ENCODE measurements at regions of chr15 and their contacts with region 1.

Region 1: GRCh38 chr15:49620658-49621368 is at the starts of genes DTWD1 and FAM227B:
- DNase-seq: peak; percentile 98
- ATAC-seq: peak; percentile 98
- H3K4me3 ChIP-seq: peak within 1 kb of the TSS; percentile 77
- H3K27ac ChIP-seq: peak within 1 kb of the TSS; percentile 95
- H3K4me1 ChIP-seq: peaks cover 3% of the 10 kb centered on the region; the same call in 1 of the 2 replicates
- H3K27me3 ChIP-seq: no peaks in the 10 kb centered on the region
- CTCF ChIP-seq: no peak
- POLR2A ChIP-seq: peak; percentile 92
- RAD21 ChIP-seq: peak; percentile 32
- total RNA-seq, gene DTWD1: 20.1 and 24.4 TPM in 2 replicates
- total RNA-seq, gene FAM227B: 1.8 and 2.5 TPM in 2 replicates

Region 2: GRCh38 chr15:49235446-49236124 is 385.2 kb before region 1 on chr15:
- CTCF ChIA-PET with region 1: no interaction called
- POLR2A ChIA-PET with region 1: no interaction called
- dilution Hi-C with region 1: no loop called
- in situ Hi-C with region 1: loop called (anchors 25 kb)
- intact Hi-C with region 1: loop called (anchors 5 kb)
- DNase-seq: peak; percentile 92
- ATAC-seq: peak; percentile 88
- H3K4me3 ChIP-seq: no peak overlapping the region
- H3K27ac ChIP-seq: peak overlapping the region; percentile 70; the same call in 1 of the 2 replicates
- H3K4me1 ChIP-seq: peaks cover 3% of the 10 kb centered on the region
- H3K27me3 ChIP-seq: no peaks in the 10 kb centered on the region
- CTCF ChIP-seq: peak; percentile 91
- POLR2A ChIP-seq: no peak
- RAD21 ChIP-seq: peak; percentile 94

Region 3: DNA sequence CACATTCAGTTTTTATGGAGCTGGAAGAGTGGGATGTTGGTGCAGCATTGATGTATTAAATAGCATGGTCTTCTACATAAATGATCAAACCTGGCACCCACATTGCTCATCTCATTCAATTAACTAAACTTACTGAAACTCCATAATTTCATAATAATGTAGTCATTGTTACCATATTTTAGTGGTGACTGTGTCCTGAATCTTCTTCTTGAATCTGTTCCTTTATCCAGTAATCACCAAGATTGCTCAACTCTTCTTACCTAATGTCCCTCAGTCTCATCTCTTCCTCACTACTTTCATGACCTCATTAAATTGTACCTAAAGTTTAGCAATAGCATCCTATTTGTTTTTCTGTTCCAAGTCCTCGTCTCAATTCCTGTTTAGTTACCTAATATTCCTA is 128.0 kb before region 1 on chr15:
- CTCF ChIA-PET with region 1: interaction called, 3 read pairs
- POLR2A ChIA-PET with region 1: interaction called, 4 read pairs
- dilution Hi-C with region 1: no loop called
- in situ Hi-C with region 1: no loop called
- intact Hi-C with region 1: loop called (anchors 5 kb)
- DNase-seq: peak; percentile 90
- ATAC-seq: no peak
- H3K4me3 ChIP-seq: no peak overlapping the region
- H3K27ac ChIP-seq: no peak overlapping the region
- H3K4me1 ChIP-seq: peaks cover 14% of the 10 kb centered on the region
- H3K27me3 ChIP-seq: no peaks in the 10 kb centered on the region
- CTCF ChIP-seq: no peak
- POLR2A ChIP-seq: no peak
- RAD21 ChIP-seq: no peak

Region 4: DNA sequence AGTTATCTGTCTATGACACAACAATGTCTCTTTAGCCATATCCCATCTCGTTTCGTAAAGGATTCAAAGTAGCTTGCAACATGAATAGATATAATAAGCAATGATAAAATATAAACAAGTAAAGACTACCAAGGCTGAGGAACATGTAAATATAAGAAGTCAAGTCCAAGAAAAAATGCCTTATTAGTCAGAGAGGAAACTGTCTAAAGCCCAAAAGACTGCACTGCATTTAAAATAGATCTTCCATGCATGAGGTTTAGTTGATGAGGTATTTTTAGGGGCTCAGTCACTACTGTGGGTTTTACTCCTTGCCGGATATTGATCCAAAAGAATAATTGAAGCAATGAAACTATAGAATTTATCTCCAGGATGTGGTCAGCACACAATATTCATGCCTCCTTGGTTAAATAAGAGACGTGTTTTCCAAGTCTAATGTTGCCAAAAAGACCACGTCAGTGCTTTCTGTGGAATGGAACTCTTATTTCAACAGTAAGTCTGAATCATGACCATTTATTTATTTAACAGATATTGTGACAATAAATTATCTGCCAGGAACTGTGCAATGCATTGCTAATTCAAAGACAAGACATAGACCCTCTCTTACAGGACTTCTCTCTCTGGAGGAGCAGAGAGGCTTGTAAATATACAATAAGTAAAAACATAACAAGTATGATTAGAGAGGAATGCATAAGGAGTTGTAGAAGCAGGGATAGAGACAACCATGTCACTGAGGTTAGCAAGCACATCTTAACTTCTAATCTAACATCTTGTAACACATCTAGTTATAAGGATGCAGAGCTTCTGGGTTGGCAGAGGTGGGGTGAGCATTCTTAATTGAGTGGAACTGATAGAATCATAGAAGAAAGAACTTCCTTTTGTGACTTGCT is 227.4 kb after region 1 on chr15:
- CTCF ChIA-PET with region 1: no interaction called
- POLR2A ChIA-PET with region 1: no interaction called
- dilution Hi-C with region 1: no loop called
- in situ Hi-C with region 1: no loop called
- intact Hi-C with region 1: loop called (anchors 2 kb)
- DNase-seq: peak; percentile 99
- ATAC-seq: peak; percentile 80
- H3K4me3 ChIP-seq: no peak overlapping the region
- H3K27ac ChIP-seq: peak overlapping the region; percentile 100
- H3K4me1 ChIP-seq: peaks cover 19% of the 10 kb centered on the region
- H3K27me3 ChIP-seq: no peaks in the 10 kb centered on the region
- CTCF ChIP-seq: no peak
- POLR2A ChIP-seq: no peak
- RAD21 ChIP-seq: no peak; the same call in none of the 2 replicates

Region 5: DNA sequence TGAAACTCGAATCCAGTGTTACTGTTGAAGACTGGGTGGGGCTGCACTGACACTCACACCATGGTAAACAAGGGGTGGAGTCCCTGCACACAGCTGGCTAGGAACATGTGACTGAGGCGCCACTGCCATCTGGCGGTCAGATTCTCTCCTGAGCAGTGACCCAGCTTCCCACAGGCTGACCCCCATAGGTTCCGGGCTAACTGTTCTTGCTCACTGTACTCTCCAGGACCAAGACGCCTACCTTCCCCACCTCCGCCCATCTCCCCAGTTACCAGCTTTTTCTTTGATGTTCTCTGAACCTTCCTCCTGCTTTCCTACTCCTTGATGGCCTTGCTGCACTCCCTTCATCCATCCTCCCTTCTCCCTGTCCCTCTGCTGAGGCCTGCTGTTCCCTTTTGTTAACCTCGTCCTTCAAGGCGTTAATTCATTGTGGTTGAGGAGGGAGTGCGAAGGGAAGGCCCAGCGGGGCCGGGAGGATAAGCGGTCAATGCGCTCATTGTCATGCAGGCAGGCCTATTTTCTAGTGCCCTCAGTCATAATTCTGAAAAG is 383.0 kb after region 1 on chr15:
- CTCF ChIA-PET with region 1: no interaction called
- POLR2A ChIA-PET with region 1: interaction called, 3 read pairs
- dilution Hi-C with region 1: no loop called
- in situ Hi-C with region 1: no loop called
- intact Hi-C with region 1: loop called (anchors 1 kb)
- DNase-seq: peak; percentile 87
- ATAC-seq: peak; percentile 98
- H3K4me3 ChIP-seq: no peak overlapping the region
- H3K27ac ChIP-seq: peak overlapping the region; percentile 70
- H3K4me1 ChIP-seq: peaks cover 11% of the 10 kb centered on the region
- H3K27me3 ChIP-seq: no peaks in the 10 kb centered on the region
- CTCF ChIP-seq: peak; percentile 88
- POLR2A ChIP-seq: no peak
- RAD21 ChIP-seq: peak; percentile 87